CD4-positive, alpha-beta T cell (primary cell): ENCODE measurements at regions of chr19 and their contacts with region 1.

Region 1: GRCh38 chr19:45038931-45039893 is at the start of gene CLASRP:
- DNase-seq: peak; percentile 78 to 95 (median 85)
- ATAC-seq: peak; percentile 87
- H3K4me3 ChIP-seq: peak within 1 kb of the TSS; percentile 98
- H3K4me3 Mint-ChIP-seq: peak within 1 kb of the TSS; percentile 99
- H3K27ac ChIP-seq: peak within 1 kb of the TSS; percentile 91 to 99
- H3K27ac Mint-ChIP-seq: peak within 1 kb of the TSS; percentile 96
- H3K4me1 ChIP-seq: peaks cover 46% of the 10 kb centered on the region
- H3K4me1 Mint-ChIP-seq: peaks cover 34% of the 10 kb centered on the region
- H3K27me3 ChIP-seq: no peaks in the 10 kb centered on the region
- H3K27me3 Mint-ChIP-seq: no peaks in the 10 kb centered on the region
- CTCF ChIP-seq: no peak
- total RNA-seq, gene CLASRP: 152 to 154 TPM

Region 2: GRCh38 chr19:44723952-44724319 is 315.3 kb before region 1 on chr19:
- CTCF ChIA-PET with region 1: no interaction called
- POLR2A ChIA-PET with region 1: no interaction called
- intact Hi-C with region 1: no loop called
- DNase-seq: peak; percentile 57 to 89 (median 76)
- ATAC-seq: peak; percentile 95
- H3K4me3 ChIP-seq: no peak overlapping the region
- H3K4me3 Mint-ChIP-seq: no peak overlapping the region
- H3K27ac ChIP-seq: no peak overlapping the region
- H3K27ac Mint-ChIP-seq: no peak overlapping the region
- H3K4me1 ChIP-seq: peaks cover 27% of the 10 kb centered on the region
- H3K4me1 Mint-ChIP-seq: peaks cover 14% of the 10 kb centered on the region
- H3K27me3 ChIP-seq: peaks cover 0 to 3% of the 10 kb centered on the region in 2 experiments
- H3K27me3 Mint-ChIP-seq: no peaks in the 10 kb centered on the region
- CTCF ChIP-seq: peak; percentile 97

Region 3: GRCh38 chr19:45079063-45079910 is 40.1 kb after region 1 on chr19 and contains the start of gene GEMIN7:
- CTCF ChIA-PET with region 1: no interaction called
- POLR2A ChIA-PET with region 1: interaction called, 5 read pairs
- intact Hi-C with region 1: loop called in 1 of 2 experiments (anchors 2 kb)
- DNase-seq: peak; percentile 61 to 89 (median 73)
- ATAC-seq: peak; percentile 72
- H3K4me3 ChIP-seq: peak within 1 kb of the TSS; percentile 93
- H3K4me3 Mint-ChIP-seq: peak within 1 kb of the TSS; percentile 93
- H3K27ac ChIP-seq: peak within 1 kb of the TSS; percentile 41 to 75
- H3K27ac Mint-ChIP-seq: peak within 1 kb of the TSS; percentile 79
- H3K4me1 ChIP-seq: peaks cover 62% of the 10 kb centered on the region
- H3K4me1 Mint-ChIP-seq: peaks cover 45% of the 10 kb centered on the region
- H3K27me3 ChIP-seq: no peaks in the 10 kb centered on the region
- H3K27me3 Mint-ChIP-seq: no peaks in the 10 kb centered on the region
- CTCF ChIP-seq: no peak
- total RNA-seq, gene GEMIN7: 4.0 to 4.8 TPM